ENCODE measurements at regions of chr7 and their contacts with region 1.

Region 1: DNA sequence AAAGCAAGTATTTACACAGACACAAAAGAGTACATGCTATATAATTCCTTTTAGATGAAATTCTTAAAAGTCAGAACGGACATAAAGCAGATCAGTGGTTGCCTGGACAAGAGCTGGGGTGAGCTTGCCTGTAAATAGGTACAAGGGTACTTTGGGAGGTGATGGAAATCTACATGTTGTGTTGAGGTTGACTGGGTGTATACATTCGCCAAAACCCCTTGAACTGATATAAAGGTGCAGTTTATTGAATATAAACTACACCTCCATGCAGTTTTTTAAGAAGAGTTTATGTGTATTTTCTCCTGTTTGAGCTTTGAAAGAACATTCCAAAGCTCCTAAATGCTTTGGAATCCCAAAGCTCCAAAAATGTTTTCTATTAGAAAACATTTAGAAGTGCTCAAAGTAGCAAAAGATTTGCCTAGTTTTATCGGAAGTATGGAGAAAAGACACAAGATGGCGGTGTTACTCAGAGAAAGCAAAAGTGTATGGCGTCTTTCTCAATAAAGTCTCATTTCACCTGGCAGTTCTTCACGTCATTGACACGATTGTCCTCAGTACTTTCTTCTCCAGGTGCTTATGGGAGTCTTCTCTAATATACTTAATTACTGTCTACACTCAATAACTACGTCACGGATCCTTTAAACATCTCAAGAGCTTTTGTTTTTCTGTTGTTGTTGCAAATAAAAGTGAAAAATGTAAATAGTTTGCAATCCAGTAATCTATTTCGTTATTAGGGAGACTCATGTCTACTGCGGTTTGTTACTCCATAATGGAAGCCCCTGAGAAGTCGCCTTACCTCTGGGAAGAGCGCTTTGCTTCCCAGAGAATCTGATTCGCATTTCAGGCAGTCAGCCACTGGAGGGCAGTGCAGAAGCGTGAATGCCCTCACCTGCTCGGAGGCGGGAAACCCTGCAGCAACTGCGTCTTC is 14.7 kb upstream of the SEC61G start:
- DNase-seq: peak; percentile 83
- ATAC-seq: peak; percentile 97 to 98
- H3K4me3 ChIP-seq: peak overlapping the region; percentile 49
- H3K27ac ChIP-seq: peak overlapping the region; percentile 59
- H3K4me1 ChIP-seq: no peaks in the 10 kb centered on the region
- H3K27me3 ChIP-seq: no peaks in the 10 kb centered on the region
- CTCF ChIP-seq: peak; percentile 86

Region 2: GRCh38 chr7:55255496-55256435 is 482.0 kb after region 1 on chr7:
- intact Hi-C with region 1: loop called (anchors 10 kb)
- DNase-seq: peak; percentile 81
- ATAC-seq: peak; percentile 96
- H3K4me3 ChIP-seq: peak overlapping the region; percentile 78
- H3K27ac ChIP-seq: no peak overlapping the region
- H3K4me1 ChIP-seq: peaks cover 12% of the 10 kb centered on the region
- H3K27me3 ChIP-seq: peaks cover 17% of the 10 kb centered on the region
- CTCF ChIP-seq: peak; percentile 83